A549 (cell line): ENCODE measurements at regions of chr20 and their contacts with region 1.

Region 1: DNA sequence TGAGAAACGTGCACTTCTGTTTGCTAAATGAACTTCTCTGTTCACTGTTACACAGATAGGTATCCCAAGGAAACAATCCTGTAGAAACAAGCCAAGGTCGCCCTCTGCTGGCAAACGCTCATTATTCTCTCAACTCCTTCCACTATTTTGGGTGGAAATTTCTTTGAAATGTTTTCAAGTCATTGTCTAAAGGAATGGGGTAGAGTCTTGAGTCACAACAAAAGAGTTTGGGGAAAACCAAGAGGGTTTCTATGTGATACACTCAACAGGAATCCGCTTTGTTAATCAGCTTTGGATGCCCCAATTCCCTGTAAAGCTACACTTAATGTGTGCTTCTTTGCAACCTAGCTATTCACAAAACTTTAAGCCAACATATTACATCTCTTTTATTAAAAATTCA is 4.6 kb upstream of the RAE1 start:
- DNase-seq: peak; percentile 32 to 69
- ATAC-seq: peak; percentile 75 to 82; a peak in 5 of 6 replicates
- H3K4me3 ChIP-seq: no peak overlapping the region
- H3K27ac ChIP-seq: no peak overlapping the region
- H3K4me1 ChIP-seq: no peaks in the 10 kb centered on the region
- CTCF ChIP-seq: peak; percentile 91
- EP300 ChIP-seq: no peak
- POLR2A ChIP-seq: no peak
- RAD21 ChIP-seq: peak; percentile 89 to 92

Region 2: GRCh38 chr20:57114290-57115005 is 232.0 kb before region 1 on chr20:
- CTCF ChIA-PET with region 1: interaction called, 11 read pairs
- POLR2A ChIA-PET with region 1: no interaction called
- DNase-seq: no peak
- ATAC-seq: no peak
- H3K4me3 ChIP-seq: no peak overlapping the region
- H3K27ac ChIP-seq: no peak overlapping the region
- H3K4me1 ChIP-seq: no peaks in the 10 kb centered on the region
- CTCF ChIP-seq: no peak
- EP300 ChIP-seq: no peak
- POLR2A ChIP-seq: no peak
- RAD21 ChIP-seq: no peak

Region 3: DNA sequence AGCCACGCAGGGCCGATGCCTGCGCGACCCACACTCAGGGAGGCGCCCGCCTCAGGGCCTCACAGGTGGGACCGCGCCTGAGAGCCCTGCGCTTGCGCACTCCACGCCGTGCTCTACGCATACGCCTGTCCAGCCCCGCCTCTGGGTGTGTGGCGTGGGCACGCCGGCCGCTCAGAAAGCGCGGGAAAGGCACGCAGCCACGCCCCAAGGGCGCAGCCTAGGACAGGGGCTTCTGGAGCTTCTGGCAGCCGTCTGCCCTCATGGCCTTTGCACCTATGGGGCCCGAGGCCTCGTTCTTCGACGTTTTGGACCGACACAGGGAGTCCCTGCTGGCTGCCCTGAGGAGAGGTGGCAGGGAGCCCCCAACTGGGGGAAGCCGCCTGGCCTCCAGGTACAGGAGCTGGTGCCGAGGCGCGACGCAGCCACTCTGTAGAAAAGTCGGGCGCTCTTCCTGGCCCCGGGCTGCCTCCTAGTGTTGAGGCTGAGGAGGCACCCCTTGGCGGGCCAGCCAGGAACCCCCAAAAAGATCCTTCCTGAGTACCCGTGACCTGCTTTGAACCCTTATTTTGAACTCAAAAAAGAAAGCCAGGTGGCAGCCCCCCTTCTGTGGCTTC is 16.8 kb before region 1 on chr20 and contains the start of gene SPO11:
- CTCF ChIA-PET with region 1: interaction called, 55 read pairs
- POLR2A ChIA-PET with region 1: no interaction called
- DNase-seq: no peak
- ATAC-seq: no peak
- H3K4me3 ChIP-seq: no peak within 1 kb of the TSS
- H3K27ac ChIP-seq: no peak within 1 kb of the TSS
- H3K4me1 ChIP-seq: no peaks in the 10 kb centered on the region
- CTCF ChIP-seq: no peak
- EP300 ChIP-seq: no peak
- POLR2A ChIP-seq: no peak
- RAD21 ChIP-seq: 0 out of 5 replicates have a peak, but pooled peaks of 1 of the 2 experiments have one; percentile 5
- polyA plus RNA-seq, gene SPO11: not detected in 2 replicates

Region 4: DNA sequence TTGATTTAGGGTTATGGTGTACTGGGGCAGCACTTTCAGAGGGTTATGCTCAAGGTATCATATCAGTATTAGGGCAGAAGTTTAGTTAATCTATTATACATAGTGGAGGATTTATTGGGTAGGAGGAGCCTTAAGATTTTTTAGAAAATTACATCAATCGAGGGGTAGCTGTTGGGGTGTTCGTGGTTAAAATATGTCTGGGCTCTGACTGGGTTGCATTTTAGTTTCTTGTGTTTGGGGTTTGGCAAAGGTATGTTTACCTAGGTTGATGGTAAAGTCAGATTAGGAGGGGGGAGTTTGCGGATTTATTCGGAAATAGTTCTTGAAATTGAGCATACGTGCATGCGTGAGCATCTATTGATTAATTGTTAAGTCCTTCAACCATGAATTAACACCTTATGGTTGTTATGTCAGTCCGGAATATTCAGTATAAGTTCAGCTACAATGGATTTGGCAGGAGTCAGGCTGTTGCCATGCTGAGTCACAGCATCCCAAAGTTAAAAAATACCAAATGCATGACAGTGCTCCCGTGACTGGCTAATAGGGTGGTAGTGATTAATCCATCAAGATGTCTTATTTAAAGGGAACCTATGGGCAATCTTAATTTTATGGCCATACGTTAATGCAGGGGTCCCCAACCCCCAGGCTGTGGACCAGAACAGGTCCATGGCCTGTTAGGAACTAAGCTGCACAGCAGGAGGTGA is 14.9 kb after region 1 on chr20:
- CTCF ChIA-PET with region 1: interaction called, 24 read pairs
- POLR2A ChIA-PET with region 1: no interaction called
- DNase-seq: no peak
- ATAC-seq: peak in 1 of 2 experiments; percentile 43; a peak in 1 of 6 replicates
- H3K4me3 ChIP-seq: no peak overlapping the region
- H3K27ac ChIP-seq: no peak overlapping the region
- H3K4me1 ChIP-seq: no peaks in the 10 kb centered on the region; the same call in 1 of the 3 replicates
- CTCF ChIP-seq: no peak
- EP300 ChIP-seq: no peak
- POLR2A ChIP-seq: no peak
- RAD21 ChIP-seq: no peak

Region 5: DNA sequence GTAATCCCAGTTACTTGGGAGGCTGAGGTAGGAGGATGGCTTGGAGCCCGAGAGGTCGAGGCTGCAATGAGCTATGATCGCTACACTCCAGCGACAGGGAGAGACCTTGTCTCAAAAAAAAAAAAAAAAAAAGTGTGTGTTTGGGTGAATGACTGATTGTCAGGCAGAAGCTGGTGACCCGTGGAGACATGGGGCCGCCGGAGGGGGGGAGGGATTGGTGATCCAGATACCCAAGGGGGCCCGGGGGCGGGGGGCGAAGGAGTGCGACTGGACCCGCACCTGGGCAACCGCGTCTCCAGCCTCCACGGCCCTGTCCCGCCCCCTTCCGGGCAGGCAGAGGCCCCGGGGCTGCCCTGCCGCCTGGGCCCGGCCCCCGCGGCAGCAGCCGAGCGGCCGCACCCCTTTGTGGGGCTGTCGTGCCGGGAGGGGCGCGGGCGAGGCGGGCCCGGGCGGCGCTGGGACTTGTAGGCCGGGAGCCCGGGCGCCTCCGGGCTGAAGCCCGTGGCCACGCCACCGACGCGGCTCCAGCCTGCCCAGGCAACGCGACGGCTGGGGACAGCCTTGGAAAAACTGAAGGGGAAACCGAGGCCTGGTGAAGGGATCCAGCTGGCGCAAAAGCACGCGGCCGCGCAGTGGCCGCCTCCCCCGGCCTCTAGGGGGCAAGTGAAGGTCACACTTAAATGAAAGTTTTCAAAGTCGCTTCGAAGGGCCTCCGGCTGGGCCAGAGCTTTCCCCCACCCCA is 42.6 kb after region 1 on chr20:
- CTCF ChIA-PET with region 1: no interaction called
- POLR2A ChIA-PET with region 1: no interaction called
- DNase-seq: no peak
- ATAC-seq: no peak
- H3K4me3 ChIP-seq: no peak overlapping the region
- H3K27ac ChIP-seq: peak overlapping the region in 1 of 2 experiments; percentile 96; a peak in 3 of 6 replicates
- H3K4me1 ChIP-seq: peaks cover 9% of the 10 kb centered on the region
- CTCF ChIP-seq: 0 out of 3 replicates have a peak, but pooled peaks have one; percentile 6
- EP300 ChIP-seq: no peak
- POLR2A ChIP-seq: no peak
- RAD21 ChIP-seq: no peak